ENCODE measurements at regions of chr1 and their contacts with region 1.

Region 1: GRCh38 chr1:26111530-26112406 is at the start of gene PDIK1L:
- DNase-seq: peak; percentile 92 to 98 (median 94)
- ATAC-seq: peak; percentile 87
- H3K4me3 ChIP-seq: peak within 1 kb of the TSS; percentile 98 to 99
- H3K4me3 Mint-ChIP-seq: peak within 1 kb of the TSS; percentile 92
- H3K27ac ChIP-seq: peak within 1 kb of the TSS; percentile 65 to 79
- H3K27ac Mint-ChIP-seq: peak within 1 kb of the TSS; percentile 91
- H3K4me1 ChIP-seq: peaks cover 19% of the 10 kb centered on the region
- H3K4me1 Mint-ChIP-seq: peaks cover 30% of the 10 kb centered on the region
- H3K27me3 ChIP-seq: no peaks in the 10 kb centered on the region
- H3K27me3 Mint-ChIP-seq: no peaks in the 10 kb centered on the region
- CTCF ChIP-seq: no peak
- total RNA-seq, gene PDIK1L: 10.2 to 10.8 TPM

Region 2: DNA sequence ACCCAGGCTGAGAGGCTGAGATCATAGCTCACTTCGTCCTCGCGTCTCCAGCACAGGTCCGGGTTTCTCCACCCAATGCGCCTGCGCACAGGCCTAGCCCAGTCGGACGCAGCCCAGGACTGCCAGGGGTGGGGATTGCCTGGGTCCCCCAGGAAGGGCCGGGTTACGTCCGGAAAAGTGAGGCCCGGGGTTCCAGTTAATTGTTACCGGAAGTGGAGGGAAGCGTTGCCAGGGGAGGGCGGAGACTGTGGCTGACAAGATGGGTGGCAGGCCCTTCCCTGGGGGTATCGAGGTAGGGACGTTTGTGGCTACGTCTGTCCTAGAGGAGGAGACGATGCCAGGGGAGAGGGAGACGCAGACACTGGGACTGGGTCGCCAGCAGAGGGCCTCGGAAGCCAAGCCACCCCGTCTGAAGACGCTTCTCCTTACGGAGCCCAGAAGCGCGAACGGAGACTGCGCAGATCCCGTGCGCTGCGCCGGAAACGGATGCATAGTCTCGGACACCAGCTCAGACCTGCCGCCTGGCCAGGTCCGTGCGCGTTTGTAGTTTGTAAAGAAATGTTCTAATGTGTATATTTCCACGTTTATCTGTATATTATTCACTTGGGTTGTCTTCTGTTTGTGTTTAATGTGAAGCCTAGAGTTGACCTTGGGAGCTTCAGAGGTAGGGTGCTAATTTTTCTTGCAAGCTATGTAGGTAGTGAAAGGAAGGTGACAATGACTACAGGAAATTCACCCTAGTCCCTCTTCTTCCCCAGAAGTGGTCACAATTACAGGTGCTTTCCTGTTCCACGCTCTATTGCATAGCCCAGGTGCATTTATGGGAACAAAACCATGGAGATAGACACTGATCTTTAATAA is 871.9 kb before region 1 on chr1:
- CTCF ChIA-PET with region 1: no interaction called
- POLR2A ChIA-PET with region 1: no interaction called
- intact Hi-C with region 1: loop called in 1 of 2 experiments (anchors 10 kb)
- DNase-seq: peak; percentile 64 to 94 (median 82)
- ATAC-seq: peak; percentile 84
- H3K4me3 ChIP-seq: peak overlapping the region; percentile 37 to 60
- H3K4me3 Mint-ChIP-seq: peak overlapping the region; percentile 92
- H3K27ac ChIP-seq: peak overlapping the region; percentile 64 to 88
- H3K27ac Mint-ChIP-seq: peak overlapping the region; percentile 97
- H3K4me1 ChIP-seq: peaks cover 47% of the 10 kb centered on the region
- H3K4me1 Mint-ChIP-seq: peaks cover 61% of the 10 kb centered on the region
- H3K27me3 ChIP-seq: no peaks in the 10 kb centered on the region
- H3K27me3 Mint-ChIP-seq: no peaks in the 10 kb centered on the region
- CTCF ChIP-seq: peak; percentile 61

Region 3: DNA sequence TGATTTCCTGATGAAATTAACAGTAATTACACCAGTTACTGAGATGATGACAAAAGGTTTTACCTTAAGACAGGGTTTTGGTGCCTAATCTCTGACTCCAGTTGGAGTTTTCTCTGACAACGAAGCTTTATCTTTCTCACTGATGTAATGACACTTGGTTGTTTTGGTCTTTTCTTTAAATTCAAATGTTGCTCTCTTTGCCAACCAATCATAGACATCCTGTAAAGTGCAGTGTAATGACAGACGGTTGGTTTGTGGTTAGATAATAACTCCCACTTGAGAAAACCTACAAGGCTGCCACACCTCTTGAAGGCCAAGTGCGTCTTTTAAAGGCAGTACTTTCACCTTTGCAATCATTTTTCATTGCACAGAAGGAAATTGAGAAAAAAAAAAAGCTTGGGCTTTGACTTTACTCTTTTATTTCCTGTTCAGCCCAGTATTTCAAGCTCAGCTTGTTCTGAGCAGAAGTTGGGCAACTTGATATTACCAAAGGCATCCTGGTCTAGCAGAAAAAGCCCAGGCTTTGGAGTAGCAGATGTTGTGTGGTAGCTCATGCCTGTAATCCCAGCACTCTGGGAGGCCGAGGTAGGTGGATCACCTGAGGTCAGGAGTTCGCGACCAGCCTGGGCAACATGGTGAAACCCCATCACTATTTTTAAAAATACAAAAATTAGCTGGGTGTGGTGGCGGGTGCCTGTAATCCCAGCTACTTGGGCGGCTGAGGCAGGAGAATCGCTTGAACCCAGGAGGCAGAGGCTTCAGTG is 14.7 kb after region 1 on chr1:
- CTCF ChIA-PET with region 1: interaction called, 9 read pairs
- POLR2A ChIA-PET with region 1: interaction called, 16 read pairs
- intact Hi-C with region 1: loop called (anchors 1 kb)
- DNase-seq: peak; percentile 18 to 94 (median 58)
- ATAC-seq: peak; percentile 98
- H3K4me3 ChIP-seq: peak overlapping the region in 1 of 2 experiments; percentile 12
- H3K4me3 Mint-ChIP-seq: peak overlapping the region; percentile 54
- H3K27ac ChIP-seq: peak overlapping the region; percentile 16 to 21
- H3K27ac Mint-ChIP-seq: peak overlapping the region; percentile 88
- H3K4me1 ChIP-seq: peaks cover 26% of the 10 kb centered on the region
- H3K4me1 Mint-ChIP-seq: peaks cover 40% of the 10 kb centered on the region
- H3K27me3 ChIP-seq: peaks cover 0 to 7% of the 10 kb centered on the region in 2 experiments
- H3K27me3 Mint-ChIP-seq: no peaks in the 10 kb centered on the region
- CTCF ChIP-seq: no peak

Region 4: GRCh38 chr1:26145041-26145959 is 33.5 kb after region 1 on chr1:
- CTCF ChIA-PET with region 1: interaction called, 289 read pairs
- POLR2A ChIA-PET with region 1: interaction called, 9 read pairs
- intact Hi-C with region 1: no loop called
- DNase-seq: peak in 8 of 9 experiments; percentile 62 to 88 (median 81)
- ATAC-seq: peak; percentile 95
- H3K4me3 ChIP-seq: no peak overlapping the region
- H3K4me3 Mint-ChIP-seq: no peak overlapping the region
- H3K27ac ChIP-seq: no peak overlapping the region
- H3K27ac Mint-ChIP-seq: no peak overlapping the region
- H3K4me1 ChIP-seq: peaks cover 6% of the 10 kb centered on the region
- H3K4me1 Mint-ChIP-seq: peaks cover 5% of the 10 kb centered on the region
- H3K27me3 ChIP-seq: no peaks in the 10 kb centered on the region
- H3K27me3 Mint-ChIP-seq: no peaks in the 10 kb centered on the region
- CTCF ChIP-seq: peak; percentile 87

Region 5: GRCh38 chr1:26431979-26432695 is 320.4 kb after region 1 on chr1 and contains the start of gene DHDDS:
- CTCF ChIA-PET with region 1: no interaction called
- POLR2A ChIA-PET with region 1: no interaction called
- intact Hi-C with region 1: loop called in 1 of 2 experiments (anchors 1 kb)
- DNase-seq: peak; percentile 96 to 99 (median 99)
- ATAC-seq: peak; percentile 96
- H3K4me3 ChIP-seq: peak within 1 kb of the TSS; percentile 72 to 78
- H3K4me3 Mint-ChIP-seq: peak within 1 kb of the TSS; percentile 95
- H3K27ac ChIP-seq: peak within 1 kb of the TSS; percentile 73 to 81
- H3K27ac Mint-ChIP-seq: peak within 1 kb of the TSS; percentile 96
- H3K4me1 ChIP-seq: peaks cover 20% of the 10 kb centered on the region
- H3K4me1 Mint-ChIP-seq: peaks cover 21% of the 10 kb centered on the region
- H3K27me3 ChIP-seq: no peaks in the 10 kb centered on the region
- H3K27me3 Mint-ChIP-seq: no peaks in the 10 kb centered on the region
- CTCF ChIP-seq: no peak
- total RNA-seq, gene DHDDS: 23.9 to 29.2 TPM